Left colon (tissue), 2 donors: ENCODE measurements at regions of chr16 and their contacts with region 1.

Region 1: DNA sequence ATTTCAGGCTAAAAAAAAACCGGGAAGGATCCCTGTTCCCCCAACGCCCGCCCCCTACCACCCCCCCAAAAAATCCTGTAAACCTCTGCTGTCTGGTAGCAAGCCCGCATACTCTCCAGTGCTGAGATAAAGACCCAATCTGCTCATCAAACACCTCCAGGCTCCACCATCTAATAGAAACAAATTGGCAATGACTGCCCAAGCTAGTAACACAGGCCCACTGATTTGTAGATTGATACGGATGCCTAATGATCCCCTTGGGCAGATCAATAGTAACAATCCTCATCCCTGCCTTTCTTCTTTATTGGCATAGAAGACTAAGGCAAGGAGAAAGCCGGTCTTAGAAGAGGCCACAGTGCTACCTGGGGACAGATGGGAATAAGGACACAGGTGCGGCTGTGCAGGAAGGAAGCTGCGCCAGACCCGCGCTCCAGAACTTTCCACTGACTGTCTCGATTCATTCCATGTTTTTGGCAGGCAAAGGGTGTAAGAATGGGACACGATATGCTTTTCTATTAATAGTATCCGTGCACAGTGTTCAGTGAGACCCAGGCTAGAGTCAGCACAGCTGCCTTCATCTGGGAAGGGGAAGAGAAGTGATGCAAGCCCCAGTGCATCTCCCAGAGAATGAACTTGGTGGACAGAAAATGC is 407.6 kb upstream of the PSMD7 start:
- DNase-seq: no peak
- ATAC-seq: no peak

Region 2: GRCh38 chr16:73565262-73565661 is 323.7 kb before region 1 on chr16:
- intact Hi-C with region 1: loop called in 1 of 2 experiments (anchors 10 kb)
- DNase-seq: no peak
- ATAC-seq: no peak

Region 3: DNA sequence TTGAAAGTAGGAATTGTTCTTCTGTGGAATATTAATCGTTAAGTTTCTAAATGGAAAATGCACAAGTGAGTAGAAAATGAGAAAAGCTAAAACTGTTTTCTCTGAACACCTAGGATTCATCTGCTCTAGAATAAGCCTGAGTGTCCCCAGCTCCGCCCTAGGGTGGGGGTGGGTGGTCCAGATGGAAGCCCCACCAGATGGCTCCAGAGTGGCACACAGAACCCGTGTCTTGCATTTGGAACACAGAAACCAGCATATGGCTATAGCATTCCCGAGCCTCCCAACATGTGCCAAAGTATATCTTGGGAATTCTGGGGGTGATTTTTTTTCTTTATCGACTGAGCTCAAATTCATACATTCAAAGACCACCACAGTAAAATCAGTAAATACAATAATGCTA is 110.1 kb before region 1 on chr16:
- intact Hi-C with region 1: no loop called
- DNase-seq: no peak
- ATAC-seq: no peak